Left lung (tissue), 14 donors: ENCODE measurements at regions of chr7 and their contacts with region 1.

Region 1: DNA sequence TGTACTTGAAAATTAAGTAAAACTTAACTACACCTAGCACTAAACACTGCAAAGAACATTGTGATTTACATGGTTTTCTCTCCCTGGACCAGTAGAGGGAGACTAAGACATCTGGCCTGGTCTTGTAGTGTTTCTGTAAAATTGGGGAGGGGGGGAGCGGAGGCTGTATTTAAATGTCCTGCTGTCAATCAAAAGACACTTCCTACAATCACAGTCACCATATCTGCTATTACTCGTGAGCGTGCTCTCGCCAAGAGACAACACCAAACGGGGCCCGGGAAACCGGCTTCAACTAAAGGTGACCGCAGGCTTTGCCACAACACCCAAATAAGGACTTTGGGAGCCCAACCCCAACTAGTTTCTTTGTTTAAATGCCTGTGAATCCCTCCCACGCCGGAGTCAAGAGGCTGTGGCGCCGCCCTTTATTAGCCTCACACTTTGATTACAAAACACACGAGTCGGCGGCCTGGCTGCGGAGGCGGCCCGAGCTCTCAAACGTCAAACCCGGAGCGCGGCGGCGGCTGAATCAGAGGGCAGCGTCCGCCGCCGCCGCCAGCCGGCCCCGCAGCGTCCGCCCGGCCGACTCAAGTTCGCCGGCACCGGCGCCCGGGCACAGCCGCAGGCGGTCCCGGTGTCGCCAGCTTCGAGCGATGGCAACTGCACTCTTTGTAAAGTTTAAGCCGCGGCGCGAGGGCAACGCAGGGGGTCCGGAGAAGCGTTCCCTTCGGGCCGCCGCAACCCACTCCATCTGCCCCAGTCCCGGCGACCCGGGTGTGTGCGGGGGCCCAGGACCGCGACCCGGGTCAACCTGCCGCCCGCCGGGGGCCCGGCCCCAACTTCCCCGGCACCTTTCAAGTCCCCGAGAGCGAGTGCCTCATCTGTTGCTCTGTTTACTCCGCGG is 1.3 kb downstream of the KDM7A start:
- DNase-seq: peak; percentile 91 to 97 (median 94)
- ATAC-seq: peak; percentile 80
- H3K4me3 ChIP-seq: peak overlapping the region; percentile 77 to 88
- H3K27ac ChIP-seq: peak overlapping the region; percentile 99 to 100
- H3K4me1 ChIP-seq: peaks cover 13 to 46% of the 10 kb centered on the region in 2 donors
- H3K27me3 ChIP-seq: peaks cover 0 to 6% of the 10 kb centered on the region in 2 donors
- CTCF ChIP-seq: peak; percentile 59 to 70

Region 2: DNA sequence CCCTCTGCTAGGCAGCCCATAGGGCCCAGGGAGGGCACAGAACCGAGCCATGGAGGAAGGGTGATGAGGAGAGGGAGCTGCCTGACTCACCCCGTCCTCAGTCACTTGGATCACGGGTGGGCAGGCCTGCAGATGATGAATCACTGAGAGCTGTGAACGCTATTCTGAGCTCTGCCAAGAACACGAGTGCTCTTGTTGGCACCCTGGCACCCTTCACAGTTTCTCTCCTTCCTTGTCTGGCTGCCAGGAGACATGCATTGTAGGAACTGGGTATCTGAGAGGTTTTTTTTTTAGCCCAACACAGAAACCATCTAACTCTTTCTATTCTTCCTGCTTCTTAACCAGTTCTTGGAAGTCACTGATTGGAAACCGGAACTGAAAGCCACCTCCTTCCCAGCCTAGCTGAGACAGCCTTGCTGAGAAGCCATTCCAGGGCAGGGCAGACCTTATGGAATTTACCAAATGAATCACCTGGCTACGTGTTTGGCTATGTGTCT is 140.7 kb after region 1 on chr7:
- intact Hi-C with region 1: loop called in 1 of 2 experiments (anchors 10 kb)
- DNase-seq: peak; percentile 11 to 88 (median 56)
- ATAC-seq: peak; percentile 90
- H3K4me3 ChIP-seq: peak overlapping the region in 1 of 2 donors; percentile 10
- H3K27ac ChIP-seq: peak overlapping the region; percentile 76 to 77
- H3K4me1 ChIP-seq: peaks cover 15 to 66% of the 10 kb centered on the region in 2 donors
- H3K27me3 ChIP-seq: no peaks in the 10 kb centered on the region
- CTCF ChIP-seq: no peak